Activated CD8-positive, alpha-beta T cell treated with anti-CD3 and anti-CD28 coated beads, Interleukin-2, amount 10 ng/mL, durations not matched to agents 7 days and 5 days (primary cell): ENCODE measurements at regions of chr10 and their contacts with region 1.

Region 1: GRCh38 chr10:28241741-28242399 is 61.0 kb downstream of the MPP7 start:
- DNase-seq: peak; percentile 60
- ATAC-seq: peak; percentile 57
- H3K4me3 Mint-ChIP-seq: no peak overlapping the region
- H3K27ac Mint-ChIP-seq: no peak overlapping the region
- H3K4me1 Mint-ChIP-seq: peaks cover 11% of the 10 kb centered on the region
- H3K27me3 Mint-ChIP-seq: no peaks in the 10 kb centered on the region

Region 2: GRCh38 chr10:27742195-27743011 is 499.5 kb before region 1 on chr10:
- CTCF ChIA-PET with region 1: interaction called, 35 read pairs
- POLR2A ChIA-PET with region 1: no interaction called
- DNase-seq: peak; percentile 84
- ATAC-seq: peak; percentile 87
- H3K4me3 Mint-ChIP-seq: peak overlapping the region; percentile 59
- H3K27ac Mint-ChIP-seq: peak overlapping the region; percentile 46
- H3K4me1 Mint-ChIP-seq: peaks cover 43% of the 10 kb centered on the region
- H3K27me3 Mint-ChIP-seq: peaks cover 60% of the 10 kb centered on the region

Region 3: GRCh38 chr10:28334296-28334695 is 92.4 kb after region 1 on chr10:
- CTCF ChIA-PET with region 1: interaction called, 13 read pairs
- POLR2A ChIA-PET with region 1: no interaction called
- DNase-seq: peak; percentile 82
- ATAC-seq: peak; percentile 70
- H3K4me3 Mint-ChIP-seq: peak overlapping the region; percentile 89
- H3K27ac Mint-ChIP-seq: peak overlapping the region; percentile 100
- H3K4me1 Mint-ChIP-seq: peaks cover 68% of the 10 kb centered on the region
- H3K27me3 Mint-ChIP-seq: no peaks in the 10 kb centered on the region

Region 4: DNA sequence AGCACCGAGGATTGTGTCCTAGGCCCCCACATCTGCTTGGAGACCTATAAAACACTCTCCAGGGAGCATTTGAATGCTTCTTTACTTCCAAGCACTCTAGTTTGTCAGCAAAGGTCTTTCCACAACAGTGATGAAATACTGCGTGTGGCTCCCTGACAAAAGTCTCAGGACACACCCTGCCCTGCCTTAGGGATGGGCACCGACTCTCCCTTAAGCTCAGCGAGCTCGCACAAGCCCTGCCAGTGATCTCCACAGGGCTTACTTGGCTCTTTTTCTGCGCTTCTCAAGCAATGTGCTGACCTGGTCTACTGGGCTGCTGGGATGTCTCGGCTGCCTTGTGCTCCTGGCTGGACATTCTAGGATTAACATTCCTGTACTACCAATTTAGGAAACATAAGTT is 145.3 kb after region 1 on chr10:
- CTCF ChIA-PET with region 1: interaction called, 44 read pairs
- POLR2A ChIA-PET with region 1: no interaction called
- DNase-seq: no peak
- ATAC-seq: no peak
- H3K4me3 Mint-ChIP-seq: no peak overlapping the region
- H3K27ac Mint-ChIP-seq: no peak overlapping the region
- H3K4me1 Mint-ChIP-seq: peaks cover 9% of the 10 kb centered on the region
- H3K27me3 Mint-ChIP-seq: peaks cover 4% of the 10 kb centered on the region

Region 5: GRCh38 chr10:28393966-28394568 is 152.2 kb after region 1 on chr10:
- CTCF ChIA-PET with region 1: interaction called, 31 read pairs
- POLR2A ChIA-PET with region 1: no interaction called
- DNase-seq: peak; percentile 79
- ATAC-seq: peak; percentile 95
- H3K4me3 Mint-ChIP-seq: no peak overlapping the region
- H3K27ac Mint-ChIP-seq: no peak overlapping the region
- H3K4me1 Mint-ChIP-seq: peaks cover 4% of the 10 kb centered on the region
- H3K27me3 Mint-ChIP-seq: peaks cover 5% of the 10 kb centered on the region